OCI-LY7 (cell line): ENCODE measurements at regions of chr13 and their contacts with region 1.

Region 1: DNA sequence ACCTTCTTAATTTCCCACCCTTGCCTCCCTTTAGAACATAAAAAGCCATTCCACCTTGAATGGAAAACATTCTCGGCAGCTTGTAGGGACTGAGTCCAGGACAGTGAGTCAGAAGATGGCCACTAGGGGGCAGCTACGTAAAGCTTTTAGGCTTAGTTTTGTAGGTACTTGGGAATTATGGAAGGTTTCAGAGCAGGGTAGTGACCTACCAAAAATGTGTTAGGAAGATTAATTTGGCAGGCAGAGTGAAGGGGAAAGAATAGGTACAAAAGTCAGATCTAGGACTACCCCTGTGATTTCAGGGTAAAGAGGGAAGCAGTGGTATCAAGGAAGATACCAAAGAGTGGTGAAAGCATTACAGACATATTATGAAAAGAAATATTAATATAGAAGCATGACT is 198.4 kb downstream of the NDFIP2 start:
- DNase-seq: peak; percentile 59
- H3K4me3 ChIP-seq: no peak overlapping the region
- H3K27ac ChIP-seq: no peak overlapping the region
- H3K4me1 ChIP-seq: no peaks in the 10 kb centered on the region
- CTCF ChIP-seq: peak; percentile 86

Region 2: DNA sequence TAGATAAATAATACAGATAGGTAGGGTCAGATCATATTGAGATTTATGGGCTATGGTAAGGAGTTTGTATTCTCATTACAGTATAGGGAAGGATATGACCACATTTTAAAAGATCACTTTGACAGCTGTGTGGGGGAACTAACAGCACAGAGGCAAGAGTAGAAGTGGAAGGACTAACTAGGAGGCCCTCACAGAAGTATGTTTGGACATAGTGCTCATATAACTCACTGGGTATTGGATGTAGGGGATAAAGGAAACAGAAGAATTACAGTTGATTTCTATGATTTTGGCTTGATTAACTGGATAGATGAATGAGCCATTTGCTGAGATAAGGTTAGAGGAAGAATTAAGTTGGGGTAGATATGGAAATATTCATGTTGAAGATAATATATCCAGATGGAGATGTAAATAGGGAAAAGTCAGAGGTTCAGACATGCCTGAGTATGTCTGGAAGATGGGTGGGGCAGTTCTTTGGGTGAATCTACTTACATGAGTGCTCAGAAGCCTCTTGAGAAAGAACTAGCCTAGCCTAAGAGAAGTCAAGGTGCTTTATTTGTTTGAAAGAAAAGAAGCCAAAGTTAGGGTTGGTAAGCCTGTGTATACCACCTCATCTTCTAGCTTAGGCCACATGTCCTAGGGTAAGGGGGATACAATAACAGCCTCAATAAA is 65.0 kb before region 1 on chr13:
- CTCF ChIA-PET with region 1: no interaction called
- POLR2A ChIA-PET with region 1: no interaction called
- intact Hi-C with region 1: no loop called
- DNase-seq: no peak
- H3K4me3 ChIP-seq: no peak overlapping the region
- H3K27ac ChIP-seq: no peak overlapping the region
- H3K4me1 ChIP-seq: no peaks in the 10 kb centered on the region
- CTCF ChIP-seq: no peak

Region 3: DNA sequence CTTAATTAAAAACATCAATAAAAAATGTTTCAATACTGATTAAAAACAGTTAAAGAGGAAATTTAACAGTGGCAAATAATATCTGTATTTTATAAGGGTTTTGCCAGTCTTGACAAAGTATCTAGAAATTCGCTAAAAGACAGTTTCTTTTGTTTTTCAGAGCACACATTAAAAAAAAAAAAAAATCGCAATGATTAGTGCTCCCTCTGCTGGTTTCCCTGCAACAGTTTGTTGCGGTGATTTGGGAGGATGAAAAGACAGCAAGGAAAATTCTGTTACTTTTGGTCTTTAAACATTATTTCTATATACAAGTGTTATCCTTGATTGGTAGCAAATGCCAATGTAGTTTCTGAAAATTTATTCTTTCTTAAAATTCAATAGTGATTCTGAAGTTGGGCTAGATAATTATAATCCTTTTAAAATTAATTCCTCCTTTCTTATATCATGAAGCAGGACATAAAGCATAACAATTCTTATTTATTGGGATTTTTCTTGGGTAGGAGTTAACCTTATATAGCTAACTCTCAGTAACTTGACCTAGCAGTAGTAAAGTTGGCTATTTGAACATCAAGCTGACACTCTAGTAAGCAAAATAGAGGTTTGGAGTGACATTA is 684.7 kb after region 1 on chr13:
- CTCF ChIA-PET with region 1: no interaction called
- POLR2A ChIA-PET with region 1: no interaction called
- intact Hi-C with region 1: loop called (anchors 10 kb)
- DNase-seq: peak; percentile 15
- H3K4me3 ChIP-seq: no peak overlapping the region
- H3K27ac ChIP-seq: no peak overlapping the region
- H3K4me1 ChIP-seq: no peaks in the 10 kb centered on the region
- CTCF ChIP-seq: peak; percentile 88

Region 4: GRCh38 chr13:81017513-81018152 is 1338.3 kb after region 1 on chr13:
- CTCF ChIA-PET with region 1: no interaction called
- POLR2A ChIA-PET with region 1: no interaction called
- intact Hi-C with region 1: loop called (anchors 10 kb)
- DNase-seq: peak; percentile 46
- H3K4me3 ChIP-seq: no peak overlapping the region
- H3K27ac ChIP-seq: no peak overlapping the region
- H3K4me1 ChIP-seq: no peaks in the 10 kb centered on the region
- CTCF ChIP-seq: peak; percentile 88